Ascending aorta (tissue), 2 donors: ENCODE measurements at regions of chr12 and their contacts with region 1.

Region 1: GRCh38 chr12:100827901-100828520 is 33.4 kb downstream of the ANO4 start:
- DNase-seq: no peak
- H3K4me3 ChIP-seq: no peak overlapping the region
- H3K27ac ChIP-seq: no peak overlapping the region
- H3K4me1 ChIP-seq: no peaks in the 10 kb centered on the region
- H3K27me3 ChIP-seq: no peaks in the 10 kb centered on the region
- CTCF ChIP-seq: peak in 2 of 3 experiments; percentile 26 to 53

Region 2: DNA sequence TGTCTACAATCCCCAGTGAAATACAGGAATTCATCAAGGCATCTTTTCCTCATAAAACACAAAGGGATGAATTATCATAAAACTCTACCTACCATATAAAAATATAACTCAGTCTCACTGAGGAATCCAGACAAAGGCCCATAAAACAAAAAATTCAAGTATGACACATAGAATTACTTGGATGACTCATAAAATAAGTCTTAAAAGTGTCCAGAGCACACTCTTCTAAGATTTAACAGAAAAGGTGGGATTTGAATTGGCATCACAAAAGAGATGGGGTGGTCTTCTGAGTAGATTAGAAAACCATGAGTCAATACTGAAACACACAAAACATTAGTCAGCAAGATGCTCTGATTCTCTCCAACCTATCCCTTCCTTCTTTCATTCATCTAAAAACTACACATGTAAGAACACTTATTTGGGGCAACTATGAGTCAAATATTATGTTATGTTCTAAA is 1383.1 kb before region 1 on chr12:
- intact Hi-C with region 1: no loop called
- DNase-seq: no peak
- H3K4me3 ChIP-seq: no peak overlapping the region
- H3K27ac ChIP-seq: no peak overlapping the region
- H3K4me1 ChIP-seq: no peaks in the 10 kb centered on the region
- H3K27me3 ChIP-seq: no peaks in the 10 kb centered on the region
- CTCF ChIP-seq: no peak

Region 3: GRCh38 chr12:100799770-100800169 is 28.2 kb before region 1 on chr12:
- intact Hi-C with region 1: no loop called
- DNase-seq: no peak
- H3K4me3 ChIP-seq: no peak overlapping the region
- H3K27ac ChIP-seq: no peak overlapping the region
- H3K4me1 ChIP-seq: no peaks in the 10 kb centered on the region
- H3K27me3 ChIP-seq: no peaks in the 10 kb centered on the region
- CTCF ChIP-seq: no peak

Region 4: DNA sequence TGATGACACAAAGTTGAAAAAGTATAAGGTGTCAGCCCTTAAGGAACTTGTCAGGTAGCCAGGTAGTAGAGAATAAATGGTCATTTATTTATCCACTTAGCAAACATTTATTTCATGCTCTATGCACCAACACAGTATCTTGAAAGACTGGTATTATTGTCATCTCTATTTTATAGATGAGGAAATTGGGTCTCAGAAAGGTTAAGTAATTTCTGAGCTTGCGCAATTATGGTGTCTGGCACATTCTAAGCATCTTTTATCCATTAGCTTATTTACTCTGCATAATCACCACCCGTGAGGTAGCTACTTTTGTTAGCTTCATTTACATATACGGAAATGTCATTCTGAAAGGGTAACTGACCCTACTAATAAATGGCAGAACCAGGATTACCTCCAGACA is 449.4 kb after region 1 on chr12:
- intact Hi-C with region 1: loop called (anchors 10 kb)
- DNase-seq: no peak
- H3K4me3 ChIP-seq: no peak overlapping the region
- H3K27ac ChIP-seq: no peak overlapping the region
- H3K4me1 ChIP-seq: peaks cover 0 to 3% of the 10 kb centered on the region in 2 donors
- H3K27me3 ChIP-seq: no peaks in the 10 kb centered on the region
- CTCF ChIP-seq: no peak

Region 5: GRCh38 chr12:101323255-101323654 is 495.2 kb after region 1 on chr12:
- intact Hi-C with region 1: loop called (anchors 5 kb)
- DNase-seq: no peak
- H3K4me3 ChIP-seq: no peak overlapping the region
- H3K27ac ChIP-seq: no peak overlapping the region
- H3K4me1 ChIP-seq: no peaks in the 10 kb centered on the region
- H3K27me3 ChIP-seq: no peaks in the 10 kb centered on the region
- CTCF ChIP-seq: no peak